Esophagus squamous epithelium (tissue), 5 donors: ENCODE measurements at regions of chr16 and their contacts with region 1.

Region 1: DNA sequence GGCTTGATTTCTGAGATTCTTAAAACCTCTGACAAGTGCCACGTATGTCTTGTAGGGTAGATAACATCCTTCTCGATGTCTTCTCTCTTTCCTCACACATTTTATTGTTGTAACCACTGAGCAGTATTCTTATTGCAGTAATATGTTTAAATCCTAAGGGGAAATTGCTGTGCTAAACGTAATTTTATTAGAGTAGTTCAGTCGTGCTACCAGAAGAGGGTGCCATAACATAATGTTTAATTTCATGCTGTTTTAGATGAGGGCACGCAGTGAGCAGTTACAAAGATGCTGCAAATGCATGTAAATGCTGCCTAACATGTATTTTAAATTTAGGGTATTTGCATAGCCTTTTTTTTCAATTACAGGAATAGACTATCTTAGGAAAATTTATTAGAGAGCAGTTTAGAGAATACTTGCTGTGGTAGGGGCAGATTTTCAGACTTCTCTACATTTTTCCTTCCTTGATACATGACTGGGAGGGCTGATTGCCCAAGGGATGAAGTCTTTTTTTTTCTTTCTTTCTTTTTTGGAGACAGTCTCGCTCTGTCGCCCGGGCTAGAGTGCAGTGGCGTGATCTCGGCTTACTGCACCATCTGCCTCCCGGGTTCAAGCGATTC is 51.7 kb downstream of the GAN start:
- DNase-seq: no peak
- H3K4me3 ChIP-seq: no peak overlapping the region
- H3K27ac ChIP-seq: no peak overlapping the region
- H3K4me1 ChIP-seq: peaks cover 0 to 8% (median 0%) of the 10 kb centered on the region in 3 donors
- H3K27me3 ChIP-seq: no peaks in the 10 kb centered on the region
- CTCF ChIP-seq: peak; percentile 42 to 81 (median 66)
- POLR2A ChIP-seq: peak in 1 of 4 donors; percentile 27

Region 2: DNA sequence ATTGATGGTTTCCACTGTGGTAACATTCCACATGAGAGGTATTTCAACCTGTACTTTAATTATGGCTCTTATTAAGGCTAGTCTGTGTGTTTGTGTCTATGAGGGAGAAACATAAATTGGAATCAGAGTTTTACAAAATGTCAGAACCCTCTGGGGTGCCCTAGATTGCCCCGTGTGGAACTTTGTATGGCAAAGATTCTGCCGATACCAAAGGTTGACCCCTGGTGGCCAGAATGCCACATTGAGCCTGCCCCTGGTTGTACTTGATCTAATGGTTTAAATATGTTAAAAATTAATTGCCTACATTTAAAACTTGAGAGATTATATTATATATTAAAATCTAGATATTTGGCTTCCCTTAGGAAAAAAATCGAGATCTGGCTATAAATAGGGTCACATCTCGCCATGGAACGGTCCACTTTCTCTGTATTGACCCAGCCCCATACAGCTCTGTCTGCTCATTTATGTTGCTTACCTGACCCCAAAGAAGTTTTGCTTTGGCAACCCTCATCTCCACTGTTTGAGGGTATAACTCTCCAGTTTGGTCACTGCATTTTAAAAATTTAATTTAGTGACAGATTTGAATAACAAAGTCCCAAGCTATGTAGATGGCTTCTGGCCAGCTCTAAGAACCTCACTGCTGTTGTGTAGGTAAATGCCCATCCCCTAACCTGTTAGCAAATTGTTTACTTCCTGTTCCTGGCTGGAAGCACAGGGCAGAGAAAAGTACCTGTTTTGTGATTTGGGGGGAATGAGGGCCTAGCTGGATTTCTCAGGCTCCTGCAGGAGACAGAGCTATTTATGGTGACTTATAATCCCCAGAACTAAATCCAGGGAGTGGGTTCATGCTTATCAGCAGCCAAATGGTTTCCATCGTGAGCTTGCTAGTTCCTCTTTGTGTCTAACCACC is 507.7 kb after region 1 on chr16:
- intact Hi-C with region 1: loop called (anchors 10 kb)
- DNase-seq: no peak
- H3K4me3 ChIP-seq: no peak overlapping the region
- H3K27ac ChIP-seq: no peak overlapping the region
- H3K4me1 ChIP-seq: peaks cover 0 to 10% (median 2%) of the 10 kb centered on the region in 3 donors
- H3K27me3 ChIP-seq: no peaks in the 10 kb centered on the region
- CTCF ChIP-seq: peak; percentile 53 to 82 (median 78)
- POLR2A ChIP-seq: no peak